GM23248 (cell line): ENCODE measurements at regions of chr4 and their contacts with region 1.

Region 1: GRCh38 chr4:74529284-74530041 is 84.5 kb downstream of the AREG start:
- DNase-seq: no peak
- H3K4me3 ChIP-seq: no peak overlapping the region
- H3K27ac ChIP-seq: no peak overlapping the region
- H3K4me1 ChIP-seq: peaks cover 20% of the 10 kb centered on the region
- H3K27me3 ChIP-seq: no peaks in the 10 kb centered on the region

Region 2: GRCh38 chr4:74385386-74385785 is 144.1 kb before region 1 on chr4:
- in situ Hi-C with region 1: loop called (anchors 10 kb)
- DNase-seq: no peak
- H3K4me3 ChIP-seq: no peak overlapping the region
- H3K27ac ChIP-seq: no peak overlapping the region
- H3K4me1 ChIP-seq: no peaks in the 10 kb centered on the region
- H3K27me3 ChIP-seq: no peaks in the 10 kb centered on the region

Region 3: GRCh38 chr4:74418063-74418670 is 111.3 kb before region 1 on chr4:
- in situ Hi-C with region 1: no loop called
- DNase-seq: peak; percentile 84
- H3K4me3 ChIP-seq: no peak overlapping the region; the same call in 1 of the 2 replicates
- H3K27ac ChIP-seq: peak overlapping the region; percentile 3; the same call in 1 of the 2 replicates
- H3K4me1 ChIP-seq: peaks cover 19% of the 10 kb centered on the region
- H3K27me3 ChIP-seq: no peaks in the 10 kb centered on the region

Region 4: DNA sequence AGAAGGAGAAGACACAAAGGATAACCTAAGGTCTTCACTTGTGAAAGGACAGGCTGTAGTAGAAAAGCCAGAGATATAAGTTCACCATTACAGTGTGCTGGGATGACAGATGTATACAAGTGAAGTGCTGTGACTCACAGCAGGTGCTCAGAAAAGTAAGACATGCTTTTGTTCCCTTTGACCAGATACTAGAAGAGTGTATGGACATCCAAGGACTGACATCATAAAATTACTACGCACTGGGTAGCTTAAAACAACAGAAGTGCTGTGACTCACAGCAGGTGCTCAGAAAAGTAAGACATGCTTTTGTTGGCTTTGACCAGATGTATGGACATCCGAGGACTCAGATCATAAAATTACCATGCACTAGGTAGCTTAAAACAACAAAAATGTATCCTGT is 326.4 kb after region 1 on chr4:
- in situ Hi-C with region 1: no loop called
- DNase-seq: no peak
- H3K4me3 ChIP-seq: no peak overlapping the region
- H3K27ac ChIP-seq: no peak overlapping the region
- H3K4me1 ChIP-seq: no peaks in the 10 kb centered on the region
- H3K27me3 ChIP-seq: 0 out of 2 replicates have a peak, but pooled peaks cover 5% of the 10 kb centered on the region